Gastrocnemius medialis (tissue), 4 donors: ENCODE measurements at regions of chrX and their contacts with region 1.

Region 1: GRCh38 chrX:14039344-14039743 is 9.7 kb upstream of the GEMIN8 start:
- DNase-seq: no peak
- ATAC-seq: no peak
- H3K4me3 ChIP-seq: no peak overlapping the region
- H3K27ac ChIP-seq: no peak overlapping the region
- H3K4me1 ChIP-seq: no peaks in the 10 kb centered on the region
- H3K27me3 ChIP-seq: peaks cover 0 to 11% (median 0%) of the 10 kb centered on the region in 3 donors
- CTCF ChIP-seq: peak; percentile 27 to 68 (median 42)
- POLR2A ChIP-seq: no peak

Region 2: DNA sequence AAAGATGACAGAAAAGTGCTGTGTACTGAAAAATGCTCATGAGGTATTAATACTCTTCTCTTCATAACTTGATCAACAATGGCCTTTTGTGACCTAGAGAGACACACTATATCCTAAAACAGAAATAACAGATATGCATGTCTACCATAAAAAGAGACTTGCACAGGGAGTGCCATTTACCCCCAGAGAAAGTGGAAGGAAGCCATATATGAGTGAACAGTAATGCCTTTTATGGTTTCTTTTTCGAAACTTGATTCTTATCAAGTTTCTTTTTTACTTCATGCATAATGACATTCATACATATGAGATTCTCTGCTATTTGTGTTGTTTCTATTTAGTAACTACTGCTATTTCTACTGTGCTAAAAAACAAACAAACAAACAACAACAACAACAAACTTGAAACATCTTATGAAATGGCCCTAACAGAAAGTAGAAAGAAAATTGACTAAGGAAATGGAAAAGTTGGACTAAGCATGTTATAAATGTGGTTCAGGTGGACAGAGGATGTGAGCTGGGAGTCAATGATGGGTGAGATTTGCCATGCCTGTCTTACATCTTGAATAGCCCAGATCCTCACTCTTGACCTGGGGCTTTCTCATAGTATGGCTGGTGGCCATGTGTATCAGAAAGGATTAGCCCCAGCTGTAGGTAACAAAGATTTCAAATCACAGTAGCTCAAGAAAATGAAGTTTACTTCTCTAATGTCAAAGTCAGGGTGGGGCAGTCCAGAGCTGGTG is 53.5 kb before region 1 on chrX:
- in situ Hi-C with region 1: no loop called
- intact Hi-C with region 1: no loop called
- DNase-seq: no peak
- ATAC-seq: no peak
- H3K4me3 ChIP-seq: no peak overlapping the region
- H3K27ac ChIP-seq: no peak overlapping the region
- H3K4me1 ChIP-seq: no peaks in the 10 kb centered on the region
- H3K27me3 ChIP-seq: no peaks in the 10 kb centered on the region
- CTCF ChIP-seq: no peak
- POLR2A ChIP-seq: no peak

Region 3: DNA sequence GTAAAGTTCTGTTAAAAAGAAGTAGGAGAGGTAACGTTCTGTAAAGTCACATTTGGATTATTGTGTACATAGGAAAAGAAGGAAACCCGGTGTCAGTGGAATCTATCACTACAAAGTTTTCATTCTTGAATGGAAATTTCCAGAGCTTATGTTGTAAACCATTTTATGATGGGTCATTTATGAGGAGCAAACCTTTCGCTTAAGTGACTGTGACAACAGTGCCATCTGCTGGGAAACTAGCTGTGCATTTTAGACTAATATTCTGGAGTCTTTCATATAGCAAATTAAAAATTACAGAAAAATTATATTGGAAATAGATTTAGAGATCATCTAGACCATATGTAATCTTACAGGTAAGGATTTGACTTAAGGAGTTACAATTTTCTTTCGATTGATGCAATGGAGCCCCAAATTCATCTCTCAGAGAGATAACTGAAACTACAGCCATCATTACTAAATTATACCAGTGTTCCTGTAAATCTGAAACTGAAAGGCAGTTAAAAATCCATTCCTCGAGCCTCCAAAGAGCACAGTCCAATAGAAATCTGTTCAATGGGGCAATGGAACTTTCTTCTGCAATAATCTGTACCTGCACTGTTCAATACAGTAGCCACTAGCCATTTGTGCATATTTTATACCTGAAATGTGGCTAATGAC is 1203.7 kb after region 1 on chrX:
- in situ Hi-C with region 1: loop called in 1 of 4 experiments (anchors 25 kb)
- intact Hi-C with region 1: loop called (anchors 5 kb)
- DNase-seq: no peak
- ATAC-seq: no peak
- H3K4me3 ChIP-seq: no peak overlapping the region
- H3K27ac ChIP-seq: no peak overlapping the region
- H3K4me1 ChIP-seq: no peaks in the 10 kb centered on the region
- H3K27me3 ChIP-seq: peaks cover 0 to 5% (median 0%) of the 10 kb centered on the region in 3 donors
- CTCF ChIP-seq: peak in 2 of 5 experiments; percentile 20 to 46
- POLR2A ChIP-seq: no peak